Activated B cell treated with CpG ODN at 0.5 μM for 24 hours (primary cell): ENCODE measurements at regions of chr4 and their contacts with region 1.

Region 1: DNA sequence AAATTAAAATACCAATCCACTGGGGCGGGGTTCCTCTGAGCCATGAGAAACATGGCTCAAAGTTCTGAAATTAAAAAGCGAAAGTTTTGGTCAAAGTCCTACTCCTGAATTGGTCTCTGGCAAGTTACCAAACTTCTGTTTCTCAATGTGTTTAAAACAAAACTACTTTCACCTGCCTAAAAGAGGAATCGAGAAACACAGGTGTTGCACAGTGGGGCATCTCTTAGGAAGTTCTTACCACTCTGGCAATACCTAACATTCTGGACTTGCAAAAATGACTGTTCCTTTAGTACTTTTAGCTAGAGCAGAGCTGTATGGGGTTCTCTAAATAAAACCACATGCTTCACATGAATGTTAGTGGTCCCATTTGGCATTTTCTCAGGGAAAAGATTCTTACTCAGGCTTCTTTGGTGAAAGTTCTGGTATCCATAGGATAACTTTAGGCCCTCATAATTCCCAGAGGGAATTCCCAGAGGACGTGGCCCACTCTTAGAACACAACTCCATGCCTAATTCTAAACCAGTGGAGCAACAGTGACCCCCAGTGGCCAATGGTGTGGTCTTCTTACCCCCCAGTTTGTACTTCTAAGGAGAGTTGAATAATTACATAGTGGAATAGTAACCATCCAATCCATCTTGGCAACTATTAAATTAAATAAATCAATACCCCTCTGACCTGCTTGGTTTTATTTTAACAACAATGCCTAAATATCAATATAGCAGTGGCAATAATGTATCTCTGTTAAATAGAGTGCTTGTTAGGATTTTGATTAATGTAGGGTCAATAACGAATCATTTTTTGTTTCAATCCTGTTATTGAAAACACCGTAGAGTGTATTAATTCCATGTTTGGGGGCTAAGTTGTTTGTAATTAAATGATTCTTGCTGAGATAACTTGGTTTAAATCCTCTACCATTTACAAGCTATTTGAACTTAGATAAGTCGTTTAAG is 21.9 kb downstream of the BMP3 start:
- DNase-seq: peak; percentile 31
- ATAC-seq: peak; percentile 84
- H3K4me3 Mint-ChIP-seq: no peak overlapping the region
- H3K27ac Mint-ChIP-seq: no peak overlapping the region
- H3K4me1 Mint-ChIP-seq: peaks cover 14% of the 10 kb centered on the region
- H3K27me3 Mint-ChIP-seq: no peaks in the 10 kb centered on the region
- CTCF ChIP-seq: no peak

Region 2: GRCh38 chr4:79917246-79917645 is 1135.1 kb before region 1 on chr4:
- CTCF ChIA-PET with region 1: no interaction called
- POLR2A ChIA-PET with region 1: no interaction called
- intact Hi-C with region 1: loop called (anchors 1 kb)
- DNase-seq: peak; percentile 25
- ATAC-seq: peak; percentile 68
- H3K4me3 Mint-ChIP-seq: no peak overlapping the region
- H3K27ac Mint-ChIP-seq: no peak overlapping the region
- H3K4me1 Mint-ChIP-seq: peaks cover 4% of the 10 kb centered on the region
- H3K27me3 Mint-ChIP-seq: no peaks in the 10 kb centered on the region
- CTCF ChIP-seq: no peak

Region 3: GRCh38 chr4:80221161-80221560 is 831.2 kb before region 1 on chr4:
- CTCF ChIA-PET with region 1: no interaction called
- POLR2A ChIA-PET with region 1: no interaction called
- intact Hi-C with region 1: loop called (anchors 2 kb)
- DNase-seq: no peak
- ATAC-seq: no peak
- H3K4me3 Mint-ChIP-seq: no peak overlapping the region
- H3K27ac Mint-ChIP-seq: no peak overlapping the region
- H3K4me1 Mint-ChIP-seq: no peaks in the 10 kb centered on the region
- H3K27me3 Mint-ChIP-seq: peaks cover 19% of the 10 kb centered on the region
- CTCF ChIP-seq: no peak

Region 4: GRCh38 chr4:80989921-80990544 is 62.4 kb before region 1 on chr4:
- CTCF ChIA-PET with region 1: interaction called, 11 read pairs
- POLR2A ChIA-PET with region 1: no interaction called
- intact Hi-C with region 1: loop called (anchors 1 kb)
- DNase-seq: no peak
- ATAC-seq: peak; percentile 56
- H3K4me3 Mint-ChIP-seq: no peak overlapping the region
- H3K27ac Mint-ChIP-seq: no peak overlapping the region
- H3K4me1 Mint-ChIP-seq: peaks cover 31% of the 10 kb centered on the region
- H3K27me3 Mint-ChIP-seq: no peaks in the 10 kb centered on the region
- CTCF ChIP-seq: no peak